Endothelial cell of umbilical vein (primary cell): ENCODE measurements at regions of chr20 and their contacts with region 1.

Region 1: GRCh38 chr20:43558412-43559146 is at the start of gene SGK2:
- DNase-seq: no peak
- H3K4me3 ChIP-seq: no peak within 1 kb of the TSS
- H3K27ac ChIP-seq: no peak within 1 kb of the TSS
- H3K4me1 ChIP-seq: no peaks in the 10 kb centered on the region
- H3K27me3 ChIP-seq: no peaks in the 10 kb centered on the region
- CTCF ChIP-seq: no peak
- POLR2A ChIP-seq: no peak
- total RNA-seq, gene SGK2: 0.27 and 0.35 TPM in 2 replicates

Region 2: GRCh38 chr20:42159808-42160207 is 1398.8 kb before region 1 on chr20:
- CTCF ChIA-PET with region 1: no interaction called
- POLR2A ChIA-PET with region 1: interaction called, 15 read pairs
- dilution Hi-C with region 1: no loop called
- intact Hi-C with region 1: no loop called
- DNase-seq: no peak
- H3K4me3 ChIP-seq: no peak overlapping the region
- H3K27ac ChIP-seq: no peak overlapping the region
- H3K4me1 ChIP-seq: no peaks in the 10 kb centered on the region
- H3K27me3 ChIP-seq: no peaks in the 10 kb centered on the region
- CTCF ChIP-seq: no peak
- POLR2A ChIP-seq: no peak

Region 3: DNA sequence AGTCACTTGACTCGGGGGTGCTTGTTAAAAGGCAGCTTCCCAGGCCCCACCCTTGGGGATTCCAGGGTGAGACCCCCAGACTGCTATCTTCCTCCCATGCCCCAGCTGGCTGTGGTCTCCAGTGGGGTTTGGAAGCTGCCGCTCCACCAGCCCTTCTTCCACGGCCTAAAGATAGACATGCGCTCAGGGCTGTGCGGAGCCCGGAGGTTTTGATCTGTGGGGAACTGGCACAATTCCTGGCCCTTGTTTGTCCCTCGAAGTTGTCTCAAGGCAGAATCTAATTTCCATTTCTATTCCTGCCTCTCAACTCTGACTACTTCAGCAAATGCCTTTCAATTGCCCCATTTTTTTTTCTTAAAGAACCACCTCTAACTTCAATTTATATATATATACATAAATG is 221.5 kb before region 1 on chr20:
- CTCF ChIA-PET with region 1: no interaction called
- POLR2A ChIA-PET with region 1: no interaction called
- dilution Hi-C with region 1: no loop called
- intact Hi-C with region 1: no loop called
- DNase-seq: no peak
- H3K4me3 ChIP-seq: no peak overlapping the region
- H3K27ac ChIP-seq: no peak overlapping the region
- H3K4me1 ChIP-seq: no peaks in the 10 kb centered on the region
- H3K27me3 ChIP-seq: no peaks in the 10 kb centered on the region
- CTCF ChIP-seq: no peak
- POLR2A ChIP-seq: no peak